Lower leg skin (tissue), 4 donors: ENCODE measurements at regions of chr19 and their contacts with region 1.

Region 1: GRCh38 chr19:13150187-13150930 is at the starts of genes IER2 and STX10:
- DNase-seq: peak; percentile 96 to 99
- H3K4me3 ChIP-seq: peak within 1 kb of the TSS; percentile 76
- CTCF ChIP-seq: peak in 1 of 3 donors; percentile 42
- POLR2A ChIP-seq: no peak
- total RNA-seq, gene IER2: 118 to 146 (median 130) TPM
- total RNA-seq, gene STX10: 67.8 to 110 (median 78.0) TPM

Region 2: GRCh38 chr19:13850293-13850909 is 700.0 kb after region 1 on chr19:
- intact Hi-C with region 1: loop called (anchors 10 kb)
- DNase-seq: peak; percentile 73 to 97
- H3K4me3 ChIP-seq: no peak overlapping the region
- CTCF ChIP-seq: no peak
- POLR2A ChIP-seq: no peak